OCI-LY7 (cell line): ENCODE measurements at regions of chr10 and their contacts with region 1.

Region 1: GRCh38 chr10:35027567-35027966 is 62.6 kb downstream of the CUL2 start:
- DNase-seq: no peak
- H3K4me3 ChIP-seq: no peak overlapping the region
- H3K27ac ChIP-seq: no peak overlapping the region
- H3K4me1 ChIP-seq: no peaks in the 10 kb centered on the region
- CTCF ChIP-seq: peak; percentile 60

Region 2: GRCh38 chr10:34880817-34881216 is 146.8 kb before region 1 on chr10:
- CTCF ChIA-PET with region 1: no interaction called
- POLR2A ChIA-PET with region 1: interaction called, 10 read pairs
- intact Hi-C with region 1: no loop called
- DNase-seq: no peak
- H3K4me3 ChIP-seq: no peak overlapping the region
- H3K27ac ChIP-seq: no peak overlapping the region
- H3K4me1 ChIP-seq: no peaks in the 10 kb centered on the region
- CTCF ChIP-seq: no peak